Sciatic nerve (tissue), 2 donors: ENCODE measurements at regions of chr10 and their contacts with region 1.

Region 1: GRCh38 chr10:130719448-130719752 is 583.2 kb downstream of the GLRX3 start:
- DNase-seq: no peak
- ATAC-seq: no peak

Region 2: DNA sequence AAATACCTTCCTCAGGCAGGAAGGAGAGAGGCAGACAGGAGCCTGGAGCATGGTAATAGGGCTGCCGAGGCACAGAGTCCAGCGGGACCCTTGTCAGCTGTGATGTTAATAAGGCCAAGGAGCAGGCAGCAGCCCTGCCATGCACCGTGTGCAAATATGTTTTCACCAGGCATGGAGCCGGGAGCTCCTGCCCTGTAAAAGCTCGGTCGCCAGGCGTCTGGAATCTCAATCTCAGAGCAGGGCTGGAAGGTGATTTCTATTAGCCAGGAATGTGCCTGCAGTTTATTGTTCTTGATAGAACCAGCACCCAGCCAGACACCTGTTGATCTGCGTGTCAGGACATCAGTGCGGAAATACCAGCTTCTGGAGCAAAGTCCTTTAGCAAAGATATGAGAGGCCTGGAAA is 113.4 kb before region 1 on chr10:
- intact Hi-C with region 1: no loop called
- DNase-seq: no peak
- ATAC-seq: no peak

Region 3: DNA sequence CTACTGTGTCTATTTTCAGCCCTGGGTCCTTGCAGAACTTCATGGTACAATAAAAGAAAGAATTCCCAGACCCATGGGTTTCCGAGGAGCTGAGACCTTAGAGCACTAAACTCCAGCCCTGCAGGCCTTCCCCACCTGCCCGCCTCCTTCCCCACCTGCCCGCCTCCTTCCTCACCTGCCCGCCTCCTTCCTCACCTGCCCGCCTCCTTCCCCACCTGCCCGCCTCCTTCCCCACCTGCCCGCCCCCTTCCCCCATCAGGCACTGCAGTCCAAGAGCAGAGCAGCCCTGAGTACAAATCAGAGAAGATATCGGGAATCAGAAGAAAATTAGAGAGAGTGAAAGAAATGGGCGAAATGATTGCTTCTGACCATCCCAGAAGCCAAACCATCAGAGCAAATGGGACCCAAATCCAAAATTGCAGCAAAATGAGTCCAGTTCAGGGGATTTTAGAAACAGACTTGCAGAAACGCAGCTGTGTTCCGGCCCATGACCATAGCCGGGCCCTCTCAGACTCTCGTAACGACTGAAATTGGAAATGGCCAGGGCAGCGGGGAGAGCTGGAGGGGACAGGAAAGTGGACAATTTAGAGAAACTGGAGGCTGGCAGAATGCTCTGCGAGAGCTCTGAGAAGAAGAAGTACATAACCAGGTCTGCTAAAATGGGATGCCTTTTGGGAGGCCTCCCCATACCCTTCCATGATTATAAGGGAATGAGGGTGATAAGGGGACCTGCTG is 23.7 kb after region 1 on chr10:
- intact Hi-C with region 1: loop called (anchors 1 kb)
- DNase-seq: peak; percentile 17
- ATAC-seq: no peak